Body of pancreas (tissue), 4 donors: ENCODE measurements at regions of chr9 and their contacts with region 1.

Region 1: GRCh38 chr9:78035383-78035993 is 3.9 kb upstream of the GNAQ start:
- DNase-seq: peak; percentile 62 to 76 (median 66)
- ATAC-seq: no peak
- H3K4me3 ChIP-seq: no peak overlapping the region
- H3K27ac ChIP-seq: no peak overlapping the region
- H3K4me1 ChIP-seq: peaks cover 29% of the 10 kb centered on the region
- H3K27me3 ChIP-seq: no peaks in the 10 kb centered on the region
- CTCF ChIP-seq: peak; percentile 57 to 89 (median 84)
- POLR2A ChIP-seq: no peak

Region 2: GRCh38 chr9:77977210-77977611 is 58.3 kb before region 1 on chr9:
- intact Hi-C with region 1: loop called (anchors 10 kb)
- DNase-seq: peak; percentile 64 to 77 (median 74)
- ATAC-seq: peak; percentile 59
- H3K4me3 ChIP-seq: no peak overlapping the region
- H3K27ac ChIP-seq: peak overlapping the region in 2 of 4 donors; percentile 16 to 19
- H3K4me1 ChIP-seq: peaks cover 36% of the 10 kb centered on the region
- H3K27me3 ChIP-seq: no peaks in the 10 kb centered on the region
- CTCF ChIP-seq: peak; percentile 21 to 82 (median 64)
- POLR2A ChIP-seq: no peak